ENCODE measurements at regions of chr3 and their contacts with region 1.

Region 1: GRCh38 chr3:81764665-81765064 is 3.2 kb upstream of the GBE1 start:
- DNase-seq: no peak
- ATAC-seq: no peak

Region 2: DNA sequence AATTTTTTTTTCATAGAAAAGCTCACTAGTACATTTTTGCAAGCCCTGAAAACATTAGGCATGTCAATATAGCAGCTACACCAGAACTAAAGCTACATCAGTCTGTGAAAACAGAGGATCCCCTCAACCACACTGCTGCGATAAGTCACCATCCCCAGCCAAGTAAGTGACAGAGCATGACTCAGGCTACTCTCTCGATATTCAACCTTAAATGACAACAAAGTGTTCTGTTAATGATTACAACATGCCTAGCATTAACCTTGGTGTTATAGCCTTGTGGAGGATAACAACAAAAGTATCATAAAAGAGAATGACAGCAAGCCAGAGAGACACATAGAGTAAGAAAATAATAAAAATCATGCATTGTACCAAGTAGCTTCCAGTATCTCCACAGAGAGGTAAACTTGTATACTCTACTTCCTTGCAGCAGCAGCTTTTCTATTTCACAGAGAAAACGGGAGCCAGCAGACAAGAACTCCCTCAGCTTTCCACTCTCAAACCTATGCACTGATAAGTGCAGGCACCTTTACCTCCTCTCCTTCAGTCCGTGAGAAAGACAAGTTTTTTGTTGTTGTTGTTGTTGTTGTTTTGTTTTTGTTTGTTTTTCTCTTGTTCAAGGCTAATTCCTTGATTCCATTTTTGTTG is 79.8 kb before region 1 on chr3:
- intact Hi-C with region 1: loop called (anchors 2 kb)
- DNase-seq: no peak
- ATAC-seq: peak; percentile 90

Measured in left ventricle myocardium superior (tissue), 1 donor.